HepG2 (cell line): ENCODE measurements at regions of chr9 and their contacts with region 1.

Region 1: DNA sequence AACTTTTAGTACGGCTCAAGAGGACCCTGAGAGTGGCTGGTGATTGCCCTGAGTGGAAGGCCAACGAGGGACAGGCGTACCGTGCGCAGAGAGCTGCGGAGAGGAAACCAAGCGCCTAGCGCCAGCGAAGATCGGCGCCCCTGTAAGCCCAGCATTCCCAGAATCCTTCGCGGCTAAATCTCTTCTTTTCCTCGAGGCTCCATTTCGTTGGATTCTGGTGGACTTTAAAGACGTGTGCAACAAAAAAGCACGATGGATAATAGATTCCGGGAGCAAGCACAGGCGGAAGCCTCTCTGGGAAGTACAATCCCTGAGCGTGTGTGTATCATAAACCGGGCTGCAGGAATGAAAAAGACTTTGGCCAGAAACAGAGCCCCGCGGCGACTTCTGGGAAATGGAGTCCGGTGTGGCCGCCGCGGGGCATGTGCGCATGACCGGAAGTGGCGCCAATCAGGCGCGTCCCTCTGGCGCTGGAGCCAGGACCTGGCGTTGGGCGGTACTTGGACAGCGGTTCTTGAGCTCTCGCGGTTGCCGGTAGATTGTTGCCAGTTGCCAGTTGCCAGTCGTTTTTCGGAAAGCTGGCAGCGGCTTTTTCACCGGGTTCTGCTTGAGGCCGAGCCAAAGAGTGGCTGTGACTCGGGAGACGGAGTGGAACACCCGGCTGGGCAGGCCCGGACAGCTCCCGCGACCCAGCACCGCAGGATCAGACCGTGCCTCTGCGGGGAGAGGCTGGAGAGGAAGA is at the start of gene ZNF79:
- DNase-seq: peak; percentile 87
- ATAC-seq: peak; percentile 91
- H3K4me3 ChIP-seq: peak within 1 kb of the TSS; percentile 87 to 97 (median 93)
- H3K27ac ChIP-seq: peak within 1 kb of the TSS; percentile 95
- H3K4me1 ChIP-seq: peaks cover 47% of the 10 kb centered on the region
- H3K27me3 ChIP-seq: no peaks in the 10 kb centered on the region; a peak in 1 of 5 replicates
- CTCF ChIP-seq: 0 out of 2 replicates have a peak, but pooled peaks have one; percentile 8
- EP300 ChIP-seq: no peak
- POLR2A ChIP-seq: peak; percentile 62 to 85
- RAD21 ChIP-seq: peak; percentile 48; the same call in 1 of the 2 replicates
- total RNA-seq, gene ZNF79: 7.3 and 8.1 TPM in 2 replicates

Region 2: DNA sequence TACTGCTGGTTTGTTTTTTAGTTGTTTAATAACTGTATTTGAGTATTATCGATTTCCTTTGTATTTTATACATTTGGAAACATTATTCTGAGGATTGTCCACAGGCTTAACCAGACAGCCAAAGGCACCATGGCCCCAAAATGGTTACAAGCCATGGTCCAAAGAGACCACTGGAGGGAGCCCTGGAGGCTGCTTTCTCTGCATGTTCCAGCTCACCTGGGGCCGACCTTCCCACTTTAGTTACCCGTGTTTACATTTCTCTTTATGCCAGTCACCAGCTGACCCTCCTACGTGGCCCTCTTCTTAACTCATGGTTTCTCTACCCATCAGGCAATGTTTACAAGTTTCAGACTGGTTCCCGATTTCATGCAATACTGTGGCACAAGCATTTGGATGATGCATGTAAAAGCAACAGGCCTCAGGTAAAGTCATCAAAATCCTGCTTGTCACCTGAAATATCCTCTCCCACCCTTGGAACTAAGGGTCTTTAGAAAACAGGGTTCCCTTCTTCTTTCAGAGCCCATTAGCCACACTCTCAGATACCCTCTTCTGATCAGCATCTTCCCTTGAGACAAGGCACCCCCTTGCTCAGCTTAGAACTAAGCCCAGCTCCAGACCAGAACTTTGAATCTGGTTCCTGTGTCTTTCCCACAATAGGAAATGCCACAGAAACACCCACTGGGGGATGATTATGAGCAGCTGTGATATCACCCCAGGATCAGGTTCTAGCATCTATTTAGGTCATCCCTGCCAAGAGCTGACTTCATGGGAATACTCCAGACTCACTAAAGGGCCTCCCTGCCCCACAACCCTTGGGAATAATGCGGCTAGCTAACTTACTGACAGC is 209.5 kb before region 1 on chr9:
- CTCF ChIA-PET with region 1: no interaction called
- POLR2A ChIA-PET with region 1: interaction called, 3 read pairs
- in situ Hi-C with region 1: no loop called
- intact Hi-C with region 1: loop called (anchors 5 kb)
- DNase-seq: peak; percentile 69
- ATAC-seq: peak; percentile 67
- H3K4me3 ChIP-seq: no peak overlapping the region
- H3K27ac ChIP-seq: no peak overlapping the region
- H3K4me1 ChIP-seq: peaks cover 24% of the 10 kb centered on the region
- H3K27me3 ChIP-seq: peaks cover 0 to 2% of the 10 kb centered on the region in 2 experiments; a peak in 1 of 5 replicates
- CTCF ChIP-seq: peak; percentile 84
- EP300 ChIP-seq: no peak
- POLR2A ChIP-seq: no peak
- RAD21 ChIP-seq: peak; percentile 78

Region 3: DNA sequence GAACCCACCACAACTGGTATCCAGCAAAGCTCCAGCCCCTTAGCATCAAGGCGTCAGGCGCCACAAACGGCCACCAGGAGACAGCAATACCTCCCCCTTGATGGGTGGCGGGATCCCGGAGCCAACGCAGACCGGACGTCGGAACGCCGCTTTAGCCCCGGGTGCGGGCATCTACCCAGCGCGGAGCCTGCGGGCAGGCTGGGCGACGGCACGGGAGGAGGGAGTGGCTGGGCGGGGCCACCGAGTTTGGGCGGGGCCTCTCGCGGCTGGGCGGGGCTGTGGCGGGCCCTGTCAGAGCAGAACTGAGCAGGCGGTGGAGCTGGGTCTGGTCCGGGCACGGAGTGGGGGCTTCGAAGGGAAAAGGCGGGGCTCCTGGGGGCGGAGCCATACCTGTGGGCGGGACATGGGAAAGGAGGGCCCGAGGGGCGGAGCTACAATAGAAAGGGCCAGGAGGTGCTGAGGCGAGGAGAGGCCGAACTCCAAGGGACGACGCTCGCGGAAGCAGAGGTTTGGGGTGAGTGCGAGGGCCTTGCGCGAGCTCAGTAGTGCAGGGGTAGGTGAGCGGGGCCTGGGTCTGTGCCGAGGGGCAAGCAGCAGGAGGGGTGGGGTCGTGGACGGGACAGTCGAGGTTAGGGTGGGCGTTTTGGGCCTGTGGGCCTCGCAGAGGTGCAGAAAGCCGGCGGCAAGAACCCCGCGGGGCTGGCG is 199.8 kb before region 1 on chr9:
- CTCF ChIA-PET with region 1: no interaction called
- POLR2A ChIA-PET with region 1: interaction called, 11 read pairs
- in situ Hi-C with region 1: no loop called
- intact Hi-C with region 1: no loop called
- DNase-seq: peak; percentile 85
- ATAC-seq: peak; percentile 87
- H3K4me3 ChIP-seq: peak overlapping the region; percentile 62 to 92 (median 70)
- H3K27ac ChIP-seq: peak overlapping the region; percentile 79
- H3K4me1 ChIP-seq: peaks cover 27% of the 10 kb centered on the region
- H3K27me3 ChIP-seq: peaks cover 0 to 4% of the 10 kb centered on the region in 2 experiments; a peak in 2 of 5 replicates
- CTCF ChIP-seq: peak; percentile 41; the same call in 1 of the 2 replicates
- EP300 ChIP-seq: no peak
- POLR2A ChIP-seq: peak; percentile 35 to 69; a peak in 3 of 4 replicates
- RAD21 ChIP-seq: no peak

Region 4: DNA sequence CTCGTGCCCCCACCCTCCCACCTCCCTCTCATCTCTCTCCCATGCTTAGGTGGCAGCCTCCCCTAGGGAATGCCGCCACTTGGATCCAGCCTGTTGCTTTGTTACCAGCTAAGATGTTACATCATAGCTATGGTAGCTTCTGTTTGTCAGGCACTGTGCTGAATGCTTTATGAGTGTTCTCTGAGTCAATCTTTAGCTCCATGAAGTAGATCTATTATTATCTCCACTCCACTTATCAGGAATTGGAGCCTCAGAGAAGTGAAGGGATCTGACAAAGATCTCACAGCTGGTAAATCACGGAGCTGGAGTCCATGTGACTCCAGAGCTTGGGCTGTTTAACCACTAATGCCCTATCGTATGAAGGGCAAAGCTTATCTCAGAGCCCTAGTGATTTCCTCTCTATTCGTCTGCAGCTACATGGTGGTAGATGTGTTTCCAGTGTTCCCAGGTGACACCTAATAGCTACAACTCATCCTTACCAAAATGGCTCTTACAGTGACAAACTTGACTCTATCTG is 105.4 kb before region 1 on chr9:
- CTCF ChIA-PET with region 1: no interaction called
- POLR2A ChIA-PET with region 1: no interaction called
- in situ Hi-C with region 1: no loop called
- intact Hi-C with region 1: no loop called
- DNase-seq: no peak
- ATAC-seq: no peak
- H3K4me3 ChIP-seq: no peak overlapping the region
- H3K27ac ChIP-seq: no peak overlapping the region
- H3K4me1 ChIP-seq: no peaks in the 10 kb centered on the region
- H3K27me3 ChIP-seq: no peaks in the 10 kb centered on the region
- CTCF ChIP-seq: no peak
- EP300 ChIP-seq: no peak
- POLR2A ChIP-seq: no peak
- RAD21 ChIP-seq: no peak

Region 5: DNA sequence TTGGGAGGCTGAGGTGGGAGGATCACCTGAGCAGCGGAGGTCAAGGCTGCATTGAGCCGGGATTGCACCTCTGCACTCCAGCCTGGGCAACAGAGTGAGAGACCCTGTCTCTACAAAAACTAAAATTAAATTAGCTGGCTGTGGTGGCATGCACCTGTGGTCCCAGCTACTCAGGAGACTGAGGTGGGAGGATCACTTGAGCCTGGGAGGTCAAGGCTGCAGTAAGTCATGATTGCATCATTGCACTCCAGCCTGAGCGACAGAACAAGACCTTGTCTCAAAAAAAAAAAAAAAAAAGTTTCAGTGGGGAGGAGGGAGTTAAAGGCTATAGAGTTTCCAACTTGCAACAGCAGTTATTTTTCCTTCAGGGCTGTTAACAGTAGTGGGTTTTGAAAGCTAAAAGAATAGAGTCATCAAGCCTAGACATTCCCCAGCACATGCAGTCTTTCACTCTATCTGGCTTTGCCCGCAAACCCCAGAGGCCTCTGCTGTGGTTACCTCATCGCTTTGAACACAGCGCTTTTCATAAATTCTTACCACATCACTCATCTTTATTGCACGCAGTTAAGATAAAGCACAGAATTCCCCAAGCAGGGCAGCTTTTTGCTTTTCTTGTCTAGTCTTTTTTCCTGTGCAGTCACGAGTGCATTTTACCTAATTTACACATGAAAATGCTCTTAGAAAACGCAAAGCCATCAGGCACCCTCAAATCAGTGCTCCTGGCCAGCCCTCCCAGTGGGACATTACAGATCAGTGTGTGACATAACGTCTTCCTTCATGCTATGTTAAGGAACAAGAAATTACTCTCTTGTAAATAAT is 35.9 kb before region 1 on chr9:
- CTCF ChIA-PET with region 1: no interaction called
- POLR2A ChIA-PET with region 1: interaction called, 23 read pairs
- in situ Hi-C with region 1: no loop called
- intact Hi-C with region 1: no loop called
- DNase-seq: peak; percentile 96
- ATAC-seq: peak; percentile 90
- H3K4me3 ChIP-seq: peak overlapping the region; percentile 13 to 42 (median 23); a peak in 4 of 6 replicates
- H3K27ac ChIP-seq: peak overlapping the region; percentile 92
- H3K4me1 ChIP-seq: peaks cover 60% of the 10 kb centered on the region
- H3K27me3 ChIP-seq: no peaks in the 10 kb centered on the region
- CTCF ChIP-seq: no peak
- EP300 ChIP-seq: peak; percentile 87 to 90
- POLR2A ChIP-seq: peak in 1 of 2 experiments; percentile 50; a peak in 2 of 4 replicates
- RAD21 ChIP-seq: no peak

Region 6: DNA sequence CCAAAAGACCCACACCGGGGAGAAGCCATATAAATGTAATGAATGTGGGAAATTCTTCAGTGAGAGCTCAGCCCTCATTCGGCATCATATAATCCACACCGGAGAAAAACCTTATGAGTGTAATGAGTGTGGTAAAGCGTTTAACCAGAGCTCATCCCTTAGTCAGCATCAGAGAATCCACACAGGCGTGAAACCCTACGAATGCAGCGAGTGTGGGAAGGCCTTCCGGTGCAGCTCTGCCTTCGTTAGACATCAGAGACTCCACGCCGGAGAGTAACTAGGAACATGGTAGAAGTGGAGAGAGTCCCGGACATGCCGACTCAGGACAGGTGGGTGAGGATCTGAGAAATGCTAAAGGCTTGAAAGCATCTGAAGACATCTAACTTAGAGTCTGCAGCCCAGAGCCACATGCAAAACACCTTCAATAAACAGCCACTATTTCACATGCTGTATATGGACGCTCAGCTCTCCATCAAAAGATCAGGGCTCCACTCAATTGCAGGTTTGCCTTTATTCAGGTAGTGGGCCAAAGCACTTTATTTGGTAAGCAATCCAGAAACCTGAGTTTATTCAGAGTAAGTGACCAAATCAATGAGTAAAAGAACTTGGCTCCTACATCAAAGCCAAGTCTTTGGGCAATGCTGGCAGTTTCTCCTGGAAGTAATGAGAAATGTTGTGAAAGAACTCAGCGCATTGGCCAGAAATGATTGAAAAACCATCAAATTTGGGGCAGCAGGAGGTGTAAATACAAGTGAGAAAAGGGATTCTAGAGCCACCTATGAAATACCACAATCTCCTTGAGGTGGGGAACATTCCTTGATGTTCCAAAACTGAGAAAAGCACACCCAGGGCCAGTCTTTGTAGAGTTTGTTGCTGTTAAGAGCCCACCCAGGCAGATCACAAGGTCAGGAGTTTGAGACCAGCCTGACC is 21.1 kb after region 1 on chr9:
- CTCF ChIA-PET with region 1: no interaction called
- POLR2A ChIA-PET with region 1: interaction called, 39 read pairs
- in situ Hi-C with region 1: no loop called
- intact Hi-C with region 1: no loop called
- DNase-seq: no peak
- ATAC-seq: peak; percentile 5; the same call in 2 of the 3 replicates
- H3K4me3 ChIP-seq: no peak overlapping the region
- H3K27ac ChIP-seq: no peak overlapping the region
- H3K4me1 ChIP-seq: peaks cover 22% of the 10 kb centered on the region
- H3K27me3 ChIP-seq: no peaks in the 10 kb centered on the region; a peak in 1 of 5 replicates
- CTCF ChIP-seq: no peak
- EP300 ChIP-seq: no peak
- POLR2A ChIP-seq: peak in 1 of 2 experiments; percentile 21; a peak in 1 of 4 replicates
- RAD21 ChIP-seq: no peak

Region 7: DNA sequence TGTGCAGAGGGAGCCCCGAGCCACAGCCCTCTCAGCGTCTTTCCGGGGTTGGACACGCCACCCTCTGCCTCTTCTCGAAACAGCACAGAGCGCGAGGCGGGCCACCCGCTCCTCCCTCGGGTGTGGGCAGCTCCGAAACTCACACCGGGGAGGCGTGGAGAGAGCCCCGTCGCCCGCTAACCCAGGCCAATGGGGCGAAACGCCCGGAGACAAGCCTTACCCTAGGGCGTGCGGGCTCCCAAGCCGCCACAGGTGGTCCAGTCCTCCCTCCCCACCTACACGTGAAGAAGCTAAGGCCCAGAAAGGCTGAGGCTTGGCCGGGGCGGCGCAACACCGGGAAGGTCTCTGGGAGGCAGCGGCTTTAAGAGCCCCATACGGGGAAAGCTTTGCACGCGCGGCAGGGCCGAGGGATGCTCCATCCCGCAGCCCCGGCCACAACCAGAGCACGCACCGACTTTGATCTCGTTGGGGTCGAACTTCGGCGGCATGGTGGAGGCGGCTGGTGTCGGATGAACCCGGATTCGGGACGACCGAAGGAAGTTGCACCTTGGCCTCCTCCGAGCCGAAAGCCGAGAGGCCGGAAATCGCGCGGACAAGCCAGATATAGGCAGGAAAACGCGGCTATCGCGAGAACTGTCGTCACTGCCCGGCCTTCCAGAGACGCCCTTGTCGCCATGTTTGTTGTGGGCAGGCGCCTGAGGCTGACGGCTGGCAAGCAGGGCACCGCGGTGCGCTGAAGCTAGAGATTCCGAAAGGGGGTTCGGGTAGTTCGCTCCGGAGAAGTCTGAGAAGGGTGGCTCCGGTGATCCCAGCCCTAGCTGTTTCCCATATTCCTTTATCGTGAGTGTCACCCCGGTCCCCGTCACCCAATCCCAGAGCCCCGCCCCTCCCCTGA is 27.0 kb after region 1 on chr9 and contains the starts of genes LRSAM1 and RPL12:
- CTCF ChIA-PET with region 1: no interaction called
- POLR2A ChIA-PET with region 1: interaction called, 39 read pairs
- in situ Hi-C with region 1: no loop called
- intact Hi-C with region 1: no loop called
- DNase-seq: peak; percentile 86
- ATAC-seq: peak; percentile 66
- H3K4me3 ChIP-seq: peak within 1 kb of the TSS; percentile 85 to 97 (median 93)
- H3K27ac ChIP-seq: peak within 1 kb of the TSS; percentile 83
- H3K4me1 ChIP-seq: peaks cover 36% of the 10 kb centered on the region
- H3K27me3 ChIP-seq: no peaks in the 10 kb centered on the region; a peak in 1 of 5 replicates
- CTCF ChIP-seq: no peak
- EP300 ChIP-seq: 0 out of 4 replicates have a peak, but pooled peaks have one; percentile 20 to 25
- POLR2A ChIP-seq: peak; percentile 99 to 100
- RAD21 ChIP-seq: peak; percentile 41
- total RNA-seq, gene LRSAM1: 4.6 and 8.7 TPM in 2 replicates
- total RNA-seq, gene RPL12: 1,551 and 1,660 TPM in 2 replicates